Psoas muscle (tissue), 8 donors: ENCODE measurements at regions of chrX and their contacts with region 1.

Region 1: DNA sequence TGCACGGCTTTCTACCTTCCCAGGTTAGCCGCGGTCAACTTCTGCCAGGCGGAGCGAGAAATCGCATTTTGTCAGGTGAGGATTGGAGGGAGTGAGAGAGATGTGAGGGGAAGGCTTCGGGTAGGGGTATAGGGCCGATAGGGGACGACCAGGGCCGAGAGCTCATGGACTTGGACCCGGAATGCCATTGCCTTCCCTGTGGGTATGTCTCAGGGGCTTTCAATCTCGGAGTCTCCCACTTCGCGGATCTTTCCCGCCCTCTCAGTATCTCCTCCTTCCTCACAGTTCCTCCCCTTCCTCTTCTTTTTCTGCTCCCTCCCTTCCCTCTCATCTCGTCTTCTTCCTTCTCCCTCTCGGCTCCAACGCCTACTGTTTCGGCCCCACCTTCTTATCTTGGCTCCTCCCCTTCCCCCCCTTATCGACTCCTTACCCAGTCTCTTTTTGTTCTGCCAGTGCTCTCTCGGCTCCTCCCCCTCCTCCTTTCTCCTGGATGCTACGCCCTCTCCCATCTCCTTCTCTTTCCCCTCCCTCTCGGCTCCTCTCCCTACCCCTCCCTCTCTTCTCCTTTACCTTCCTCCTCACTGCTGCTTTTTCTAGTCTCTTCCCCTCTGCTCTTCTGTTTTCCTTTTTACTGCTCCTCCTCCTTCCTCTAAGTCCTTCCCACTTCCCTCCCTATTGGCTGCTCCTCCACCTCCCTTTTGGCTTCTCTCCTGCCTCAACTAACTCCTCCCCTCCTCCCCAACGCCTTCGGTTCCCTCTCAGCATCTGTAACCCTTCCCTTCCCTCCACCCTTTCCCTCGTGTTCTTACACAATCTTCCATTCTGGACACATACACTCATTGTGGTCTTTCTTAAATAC is 29.4 kb upstream of the RBMX start:
- DNase-seq: peak; percentile 73 to 79
- ATAC-seq: peak; percentile 71 to 85 (median 80)
- H3K4me3 ChIP-seq: peak overlapping the region; percentile 74
- H3K27ac ChIP-seq: peak overlapping the region; percentile 68
- H3K4me1 ChIP-seq: no peaks in the 10 kb centered on the region
- H3K27me3 ChIP-seq: peaks cover 0 to 6% (median 0%) of the 10 kb centered on the region in 3 donors
- CTCF ChIP-seq: no peak

Region 2: DNA sequence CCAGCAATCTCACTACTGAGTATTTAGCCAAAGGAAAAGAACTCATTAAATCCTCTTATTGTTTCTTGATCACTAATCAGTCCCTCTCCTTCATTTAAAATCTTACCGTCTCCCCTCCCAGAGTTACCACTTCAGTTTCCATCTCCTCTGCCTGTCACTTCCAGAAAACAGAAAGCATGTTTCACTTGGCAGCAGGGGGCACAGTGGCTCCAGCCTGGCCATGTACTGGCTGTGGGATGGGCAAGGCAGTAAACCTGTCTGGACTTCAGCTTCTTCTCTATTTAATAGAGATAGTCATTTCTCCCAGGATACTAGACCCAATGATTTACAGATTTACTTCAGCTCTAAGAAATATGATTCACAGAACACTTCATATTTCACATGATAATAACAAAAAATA is 198.8 kb before region 1 on chrX:
- intact Hi-C with region 1: loop called in 1 of 2 experiments (anchors 5 kb)
- DNase-seq: peak; percentile 34 to 67
- ATAC-seq: peak; percentile 71 to 90 (median 80)
- H3K4me3 ChIP-seq: no peak overlapping the region
- H3K27ac ChIP-seq: peak overlapping the region; percentile 32
- H3K4me1 ChIP-seq: peaks cover 7% of the 10 kb centered on the region
- H3K27me3 ChIP-seq: no peaks in the 10 kb centered on the region
- CTCF ChIP-seq: peak; percentile 48